ENCODE measurements at regions of chr4 and their contacts with region 1.

Region 1: DNA sequence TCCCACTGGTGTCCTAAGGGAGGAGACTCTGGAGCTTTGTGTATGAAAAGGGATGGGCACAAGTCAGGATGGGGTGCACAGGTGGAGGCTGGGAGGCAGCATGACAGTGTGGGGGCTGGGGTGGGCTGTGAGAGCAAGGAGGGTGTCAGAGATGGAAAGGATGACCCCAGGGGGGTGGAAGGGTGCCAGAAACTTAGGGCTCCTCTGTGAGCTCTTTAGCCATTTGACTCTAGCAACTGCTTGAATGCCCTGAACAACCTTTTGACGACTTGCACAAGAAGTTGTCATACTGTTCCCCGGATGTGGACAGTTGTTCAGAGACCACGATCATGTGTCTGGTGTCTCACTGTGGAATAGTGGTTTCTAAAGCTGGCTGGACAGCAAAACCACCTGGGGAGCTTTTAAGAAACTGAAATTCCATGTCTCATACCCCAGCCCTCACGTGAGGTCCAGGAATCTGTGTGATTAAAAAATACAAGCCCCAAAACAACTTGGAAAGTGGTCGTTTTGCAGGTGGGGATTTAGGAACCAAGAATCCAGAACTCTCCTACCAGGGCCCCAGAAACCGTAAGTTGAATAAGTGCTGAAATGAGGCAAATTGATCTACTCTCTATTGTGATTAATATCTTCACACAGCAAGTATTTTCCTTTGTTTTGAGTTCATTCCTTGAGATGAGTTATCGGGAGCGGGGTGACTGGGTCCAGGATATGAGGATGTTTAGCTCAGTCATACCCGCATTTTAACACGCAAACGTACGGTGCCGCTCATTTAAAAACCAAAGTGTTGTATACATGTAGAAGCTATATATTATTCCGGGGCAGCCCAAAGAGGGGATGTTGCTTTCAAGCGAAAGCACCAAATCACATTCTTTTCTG is 3.4 kb downstream of the RHOH start:
- DNase-seq: peak; percentile 83
- H3K4me3 ChIP-seq: peak overlapping the region; percentile 79
- H3K27ac ChIP-seq: peak overlapping the region; percentile 93
- H3K4me1 ChIP-seq: peaks cover 51% of the 10 kb centered on the region
- CTCF ChIP-seq: no peak

Region 2: DNA sequence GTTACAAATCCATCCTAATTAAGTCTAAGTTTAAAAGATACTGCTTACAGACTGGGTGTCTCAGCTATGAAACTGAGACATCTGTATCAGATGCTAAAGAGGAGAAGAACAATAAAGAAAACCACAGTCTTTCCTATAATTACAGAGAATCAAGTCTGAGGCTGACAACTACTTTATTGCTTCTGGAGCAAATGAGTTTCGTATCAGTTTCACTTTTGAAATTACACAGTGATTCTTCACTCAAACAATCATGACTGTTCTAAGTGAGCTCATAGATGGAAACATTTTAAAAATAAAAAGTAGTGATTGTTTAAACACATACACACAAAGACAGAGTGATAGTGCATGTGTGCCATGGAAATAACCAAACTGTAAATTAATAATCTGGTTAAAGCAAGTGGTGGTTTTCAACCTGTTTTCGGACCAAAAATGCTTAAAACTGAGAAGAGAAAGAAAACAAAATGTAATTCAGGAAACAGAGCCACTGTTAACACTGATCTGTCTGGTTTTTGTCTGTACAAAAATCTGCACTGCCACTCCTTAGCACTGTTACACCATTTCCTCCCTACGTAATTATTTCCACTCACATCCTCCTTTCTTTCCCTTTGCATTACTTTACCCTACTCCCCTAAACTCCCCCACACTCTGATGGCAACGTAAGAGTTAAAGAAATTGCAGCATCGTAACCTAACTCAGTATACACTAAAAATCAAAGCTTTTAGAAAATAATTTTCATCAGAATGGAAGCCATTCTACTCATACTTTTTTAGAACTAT is 846.6 kb before region 1 on chr4:
- CTCF ChIA-PET with region 1: no interaction called
- POLR2A ChIA-PET with region 1: interaction called, 3 read pairs
- intact Hi-C with region 1: loop called (anchors 5 kb)
- DNase-seq: peak; percentile 71
- H3K4me3 ChIP-seq: peak overlapping the region; percentile 64
- H3K27ac ChIP-seq: peak overlapping the region; percentile 93
- H3K4me1 ChIP-seq: peaks cover 68% of the 10 kb centered on the region
- CTCF ChIP-seq: no peak

Region 3: GRCh38 chr4:39631700-39632079 is 568.5 kb before region 1 on chr4:
- CTCF ChIA-PET with region 1: no interaction called
- POLR2A ChIA-PET with region 1: no interaction called
- intact Hi-C with region 1: loop called (anchors 5 kb)
- DNase-seq: peak; percentile 71
- H3K4me3 ChIP-seq: no peak overlapping the region
- H3K27ac ChIP-seq: no peak overlapping the region
- H3K4me1 ChIP-seq: peaks cover 42% of the 10 kb centered on the region
- CTCF ChIP-seq: no peak

Region 4: GRCh38 chr4:40185830-40186664 is 14.2 kb before region 1 on chr4:
- CTCF ChIA-PET with region 1: interaction called, 4 read pairs
- POLR2A ChIA-PET with region 1: interaction called, 212 read pairs
- intact Hi-C with region 1: no loop called
- DNase-seq: peak; percentile 83
- H3K4me3 ChIP-seq: peak overlapping the region; percentile 51
- H3K27ac ChIP-seq: peak overlapping the region; percentile 94
- H3K4me1 ChIP-seq: peaks cover 95% of the 10 kb centered on the region
- CTCF ChIP-seq: no peak

Region 5: GRCh38 chr4:40301603-40302002 is 101.4 kb after region 1 on chr4:
- CTCF ChIA-PET with region 1: interaction called, 3 read pairs
- POLR2A ChIA-PET with region 1: interaction called, 31 read pairs
- intact Hi-C with region 1: loop called (anchors 1 kb)
- DNase-seq: peak; percentile 98
- H3K4me3 ChIP-seq: peak overlapping the region; percentile 59
- H3K27ac ChIP-seq: peak overlapping the region; percentile 98
- H3K4me1 ChIP-seq: peaks cover 84% of the 10 kb centered on the region
- CTCF ChIP-seq: no peak

Region 6: DNA sequence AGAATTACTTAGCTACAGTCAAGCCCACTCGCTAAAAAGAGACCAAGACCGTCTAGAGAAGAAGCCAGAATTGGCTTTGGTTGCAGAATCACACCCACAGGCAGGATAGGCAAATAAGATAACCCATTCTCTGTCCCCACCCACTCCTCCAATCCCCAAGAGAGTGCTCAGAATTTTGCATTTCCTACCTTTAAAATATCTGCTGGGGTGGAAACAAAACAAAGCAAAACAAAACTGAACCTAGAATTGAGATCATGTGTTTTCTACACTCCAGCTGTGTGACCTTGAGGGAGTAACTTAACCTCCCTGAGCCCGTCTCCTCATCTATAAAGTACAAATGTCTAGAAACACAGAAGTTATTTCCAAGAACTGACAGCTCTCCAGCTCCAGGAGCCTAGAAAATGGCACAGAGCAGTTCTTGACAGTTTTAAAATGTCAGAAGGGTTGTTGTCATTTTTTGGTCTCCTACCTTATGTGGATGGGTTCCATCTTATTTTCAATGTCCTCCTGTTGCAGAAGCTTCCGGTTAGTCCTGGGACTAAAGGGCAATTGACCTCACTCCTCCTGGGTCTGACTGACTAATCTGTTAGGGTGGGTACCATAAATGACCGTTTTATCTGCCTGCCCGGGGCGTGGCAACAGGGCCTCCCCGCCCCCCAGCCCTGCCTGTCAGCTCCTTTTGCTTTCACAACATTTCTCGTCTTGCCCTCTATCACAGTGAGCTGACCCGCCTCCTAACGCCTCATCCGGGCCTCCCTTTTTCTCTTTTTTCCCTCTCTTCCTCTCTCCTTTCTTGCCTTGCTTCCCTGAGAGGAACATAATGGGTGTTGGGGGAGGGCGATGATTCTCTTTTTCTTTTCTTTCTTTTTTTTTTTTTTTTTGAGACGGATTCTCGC is 315.4 kb after region 1 on chr4:
- CTCF ChIA-PET with region 1: no interaction called
- POLR2A ChIA-PET with region 1: no interaction called
- intact Hi-C with region 1: loop called (anchors 10 kb)
- DNase-seq: peak; percentile 91
- H3K4me3 ChIP-seq: peak overlapping the region; percentile 70
- H3K27ac ChIP-seq: peak overlapping the region; percentile 89
- H3K4me1 ChIP-seq: peaks cover 65% of the 10 kb centered on the region
- CTCF ChIP-seq: no peak

Region 7: DNA sequence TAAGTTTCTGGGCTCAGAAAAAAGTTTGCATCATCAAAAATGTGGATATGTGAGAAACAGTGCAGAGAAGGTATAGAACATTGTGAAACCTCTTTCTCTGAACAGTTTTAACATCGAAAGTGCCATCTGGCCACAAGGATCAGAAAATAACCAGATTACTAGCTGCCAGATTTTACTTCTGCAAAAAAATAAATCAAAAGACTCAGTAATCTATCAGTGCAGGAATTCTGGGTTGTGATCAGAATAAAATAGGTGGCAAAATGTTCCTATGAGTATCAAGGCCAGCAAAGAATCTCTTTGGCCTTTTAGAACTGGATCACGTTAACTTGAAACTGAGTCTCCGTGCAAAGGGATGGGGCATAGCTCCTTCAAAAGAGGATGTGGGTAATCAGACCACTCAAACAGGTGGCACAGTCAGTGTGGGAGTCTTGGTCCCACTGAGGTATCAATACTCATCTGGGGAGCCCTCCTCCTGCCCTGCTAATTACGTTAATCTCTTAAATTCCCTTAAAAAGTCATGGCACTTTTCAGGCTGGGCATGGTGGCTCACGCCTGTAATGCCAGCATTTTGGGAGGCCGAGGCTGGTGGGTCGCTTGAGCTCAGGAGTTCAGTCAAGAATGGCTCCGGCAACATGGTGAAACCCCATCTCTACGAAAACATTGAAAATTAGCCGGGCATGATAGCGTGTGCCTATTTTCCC is 456.1 kb after region 1 on chr4:
- CTCF ChIA-PET with region 1: no interaction called
- POLR2A ChIA-PET with region 1: no interaction called
- intact Hi-C with region 1: loop called (anchors 10 kb)
- DNase-seq: peak; percentile 84
- H3K4me3 ChIP-seq: peak overlapping the region; percentile 31
- H3K27ac ChIP-seq: peak overlapping the region; percentile 75
- H3K4me1 ChIP-seq: peaks cover 33% of the 10 kb centered on the region
- CTCF ChIP-seq: no peak